Vagina (tissue), 2 donors: ENCODE measurements at regions of chr9 and their contacts with region 1.

Region 1: DNA sequence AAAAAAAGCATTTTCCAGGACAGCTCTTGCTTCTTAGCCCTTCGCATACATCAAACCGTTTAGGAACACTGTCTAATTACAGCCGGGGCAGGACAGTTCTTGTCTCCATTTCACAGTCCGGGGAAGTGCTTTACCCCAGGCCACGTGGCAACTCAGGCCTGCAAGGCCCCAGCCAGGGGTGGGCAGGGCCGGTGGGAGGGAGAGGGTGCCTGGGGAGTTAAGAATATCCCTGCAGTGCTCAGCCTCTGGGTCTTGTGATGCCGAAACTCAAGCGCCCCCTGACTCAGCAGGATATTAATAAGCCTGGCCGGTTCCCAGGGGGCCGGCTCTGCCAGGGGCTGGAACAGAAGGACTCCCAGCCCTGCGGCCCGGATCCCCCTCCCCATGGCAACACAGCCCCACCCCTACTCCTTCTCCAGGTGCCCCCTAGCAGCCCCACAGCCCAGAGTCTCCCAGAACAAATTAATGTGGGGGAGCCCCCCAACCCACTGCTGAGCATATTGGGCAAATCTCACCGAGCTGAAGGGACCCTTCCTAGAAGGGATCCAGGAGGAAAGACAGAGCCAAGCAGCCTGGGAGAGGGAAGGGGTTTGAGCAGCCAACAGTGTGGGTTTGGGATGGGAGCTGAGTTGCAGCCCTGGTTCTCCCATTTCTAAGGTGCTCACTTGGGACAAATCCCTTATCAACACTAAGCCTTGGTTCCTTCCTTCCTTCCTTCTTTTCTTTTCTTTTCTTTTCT is 45.3 kb downstream of the PLPP7 start:
- DNase-seq: no peak
- H3K4me3 ChIP-seq: no peak overlapping the region
- H3K27ac ChIP-seq: no peak overlapping the region
- H3K4me1 ChIP-seq: peaks cover 13% of the 10 kb centered on the region
- H3K27me3 ChIP-seq: no peaks in the 10 kb centered on the region
- CTCF ChIP-seq: no peak
- POLR2A ChIP-seq: no peak

Region 2: GRCh38 chr9:131178382-131178781 is 156.4 kb before region 1 on chr9:
- intact Hi-C with region 1: loop called (anchors 5 kb)
- DNase-seq: no peak
- H3K4me3 ChIP-seq: no peak overlapping the region
- H3K27ac ChIP-seq: no peak overlapping the region
- H3K4me1 ChIP-seq: no peaks in the 10 kb centered on the region
- H3K27me3 ChIP-seq: no peaks in the 10 kb centered on the region
- CTCF ChIP-seq: peak; percentile 57 to 86 (median 78)
- POLR2A ChIP-seq: no peak

Region 3: GRCh38 chr9:131188976-131189375 is 145.8 kb before region 1 on chr9:
- intact Hi-C with region 1: no loop called
- DNase-seq: no peak
- H3K4me3 ChIP-seq: no peak overlapping the region
- H3K27ac ChIP-seq: no peak overlapping the region
- H3K4me1 ChIP-seq: no peaks in the 10 kb centered on the region
- H3K27me3 ChIP-seq: no peaks in the 10 kb centered on the region
- CTCF ChIP-seq: no peak
- POLR2A ChIP-seq: no peak